ENCODE measurements at regions of chrX and their contacts with region 1.

Region 1: DNA sequence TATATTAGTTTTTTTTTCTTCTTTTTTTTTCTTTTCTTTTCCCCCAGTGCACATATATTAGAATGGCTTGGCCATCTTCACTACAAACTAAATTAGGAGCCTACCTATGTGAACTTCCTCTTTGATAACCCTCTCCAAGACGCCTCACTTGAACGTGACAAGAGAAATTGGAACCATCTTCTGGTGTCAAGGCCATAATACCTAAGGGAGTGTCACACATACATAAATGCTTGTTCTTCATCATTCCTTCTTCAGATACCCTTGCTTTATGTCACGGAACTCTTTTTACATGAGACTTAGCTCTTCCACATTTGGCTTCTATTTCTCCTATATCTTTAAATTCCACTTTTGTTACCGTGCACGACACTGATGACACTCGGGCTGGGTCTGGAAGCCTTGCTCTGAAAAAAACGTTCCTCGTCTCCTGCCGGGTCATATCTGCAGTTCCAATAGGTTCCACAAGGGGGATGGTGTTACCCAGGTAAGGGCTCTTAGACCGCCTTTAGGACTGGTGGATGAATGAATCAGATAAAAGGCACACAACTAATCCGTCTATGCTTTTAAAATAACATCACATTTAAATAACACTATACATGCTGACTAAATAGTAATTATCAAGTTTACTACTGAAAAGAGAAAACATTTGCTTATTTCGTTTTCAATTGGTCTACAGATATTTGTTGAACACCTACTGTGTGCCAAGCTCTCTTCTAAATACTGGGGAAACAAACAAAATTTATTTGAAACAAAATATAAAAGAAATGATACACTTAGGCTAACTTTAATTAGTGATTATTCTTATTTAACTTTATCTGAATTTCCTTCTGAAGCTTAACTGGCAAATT is 19.9 kb downstream of the DGAT2L6 start:
- DNase-seq: no peak
- ATAC-seq: no peak

Region 2: DNA sequence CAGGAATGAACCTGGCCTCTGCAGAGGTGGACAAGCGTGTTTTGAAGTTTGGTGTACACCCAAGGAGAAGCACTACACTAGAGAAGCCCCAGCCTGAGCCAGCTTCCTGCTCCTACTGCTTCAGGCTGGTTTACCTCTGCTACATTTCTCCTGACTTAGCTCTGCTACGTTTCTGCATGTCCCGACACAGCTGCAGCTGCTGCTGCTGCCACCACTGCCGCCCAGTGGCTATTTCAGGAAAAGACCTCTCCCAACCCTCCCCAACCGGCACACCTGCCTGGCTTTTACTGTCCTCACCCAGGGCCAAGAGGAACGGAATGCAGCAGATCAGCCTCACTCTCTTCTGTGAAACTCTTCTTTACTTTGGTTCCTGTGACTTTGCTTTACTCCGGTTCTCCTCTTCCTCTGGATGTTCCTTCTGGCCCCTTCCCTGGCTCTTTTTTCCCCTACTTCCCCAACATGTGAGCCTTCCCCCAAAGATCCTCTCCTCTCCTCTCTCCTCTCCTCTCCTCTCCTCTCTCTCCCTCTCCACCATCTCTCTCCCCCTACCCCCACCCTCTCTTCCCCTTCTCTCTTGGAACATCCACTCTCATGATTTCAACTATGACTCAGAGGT is 65.9 kb after region 1 on chrX:
- intact Hi-C with region 1: loop called (anchors 10 kb)
- DNase-seq: no peak
- ATAC-seq: no peak

Region 3: DNA sequence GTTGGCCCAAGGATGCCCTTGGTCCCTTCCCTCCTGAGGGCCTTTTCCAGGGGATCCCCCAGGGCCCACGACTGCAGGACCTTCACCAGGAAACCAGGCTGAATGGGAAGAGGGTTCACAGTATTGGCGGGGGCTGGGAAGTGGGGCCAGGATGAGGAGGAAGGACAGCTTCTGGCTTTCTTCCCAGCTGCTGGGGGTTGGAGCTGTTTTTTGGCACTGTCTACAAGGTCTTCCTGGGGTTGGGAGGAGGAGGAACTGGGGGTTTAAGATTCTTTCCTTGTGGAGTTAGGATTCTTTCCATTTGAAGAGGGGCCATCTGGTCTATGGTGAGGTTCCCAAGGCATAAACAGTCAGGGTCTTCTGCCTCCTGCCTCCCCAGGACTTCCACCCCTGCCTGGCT is 157.5 kb after region 1 on chrX:
- intact Hi-C with region 1: no loop called
- DNase-seq: no peak
- ATAC-seq: no peak

Measured in Right ventricle myocardium inferior (tissue), 1 donor.